IMR-90 (cell line): ENCODE measurements at regions of chr6 and their contacts with region 1.

Region 1: GRCh38 chr6:2738373-2738979 is 12.2 kb downstream of the MYLK4 start:
- DNase-seq: peak; percentile 80
- ATAC-seq: peak; percentile 78
- H3K4me3 ChIP-seq: no peak overlapping the region
- H3K27ac ChIP-seq: no peak overlapping the region
- H3K4me1 ChIP-seq: peaks cover 11% of the 10 kb centered on the region; the same call in 1 of the 2 replicates
- H3K27me3 ChIP-seq: no peaks in the 10 kb centered on the region
- CTCF ChIP-seq: peak; percentile 92
- POLR2A ChIP-seq: no peak
- RAD21 ChIP-seq: peak; percentile 94

Region 2: GRCh38 chr6:2669067-2669700 is 69.3 kb before region 1 on chr6:
- CTCF ChIA-PET with region 1: no interaction called
- POLR2A ChIA-PET with region 1: no interaction called
- dilution Hi-C with region 1: no loop called
- in situ Hi-C with region 1: no loop called
- intact Hi-C with region 1: no loop called
- DNase-seq: no peak
- ATAC-seq: no peak
- H3K4me3 ChIP-seq: no peak overlapping the region
- H3K27ac ChIP-seq: no peak overlapping the region
- H3K4me1 ChIP-seq: no peaks in the 10 kb centered on the region; the same call in 1 of the 2 replicates
- H3K27me3 ChIP-seq: no peaks in the 10 kb centered on the region
- CTCF ChIP-seq: no peak
- POLR2A ChIP-seq: no peak
- RAD21 ChIP-seq: no peak

Region 3: GRCh38 chr6:2749969-2750600 is 11.6 kb after region 1 on chr6:
- CTCF ChIA-PET with region 1: interaction called, 29 read pairs
- POLR2A ChIA-PET with region 1: no interaction called
- dilution Hi-C with region 1: no loop called
- in situ Hi-C with region 1: no loop called
- intact Hi-C with region 1: no loop called
- DNase-seq: peak; percentile 60
- ATAC-seq: peak; percentile 83
- H3K4me3 ChIP-seq: no peak overlapping the region
- H3K27ac ChIP-seq: no peak overlapping the region
- H3K4me1 ChIP-seq: peaks cover 4% of the 10 kb centered on the region; the same call in 1 of the 2 replicates
- H3K27me3 ChIP-seq: no peaks in the 10 kb centered on the region
- CTCF ChIP-seq: peak; percentile 79
- POLR2A ChIP-seq: no peak
- RAD21 ChIP-seq: peak; percentile 59

Region 4: DNA sequence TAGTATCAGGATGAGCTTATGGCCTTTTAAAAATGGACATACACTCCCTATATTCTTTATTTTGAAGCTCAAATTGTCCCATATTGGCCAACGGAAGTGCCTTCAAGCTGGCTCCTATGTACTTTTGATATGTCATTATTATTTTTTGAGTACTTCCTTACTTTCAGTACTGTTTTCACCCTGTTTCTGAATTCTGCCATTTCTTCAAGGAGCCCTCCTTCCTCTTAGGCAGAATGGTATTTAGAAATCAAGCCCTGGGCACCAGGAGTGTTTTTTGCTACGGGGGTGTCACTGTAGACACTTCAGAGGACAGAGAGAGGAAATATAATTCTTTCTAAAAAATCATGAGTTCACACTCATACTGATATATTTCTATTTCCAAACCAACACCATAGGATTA is 17.8 kb after region 1 on chr6:
- CTCF ChIA-PET with region 1: interaction called, 29 read pairs
- POLR2A ChIA-PET with region 1: no interaction called
- dilution Hi-C with region 1: no loop called
- in situ Hi-C with region 1: no loop called
- intact Hi-C with region 1: no loop called
- DNase-seq: no peak
- ATAC-seq: no peak; the same call in 1 of the 2 replicates
- H3K4me3 ChIP-seq: no peak overlapping the region
- H3K27ac ChIP-seq: no peak overlapping the region
- H3K4me1 ChIP-seq: peaks cover 9% of the 10 kb centered on the region
- H3K27me3 ChIP-seq: no peaks in the 10 kb centered on the region
- CTCF ChIP-seq: no peak
- POLR2A ChIP-seq: no peak
- RAD21 ChIP-seq: no peak

Region 5: GRCh38 chr6:2765166-2765895 is 26.9 kb after region 1 on chr6 and contains the start of gene WRNIP1:
- CTCF ChIA-PET with region 1: interaction called, 5 read pairs
- POLR2A ChIA-PET with region 1: no interaction called
- dilution Hi-C with region 1: no loop called
- in situ Hi-C with region 1: no loop called
- intact Hi-C with region 1: loop called (anchors 2 kb)
- DNase-seq: peak; percentile 99
- ATAC-seq: peak; percentile 91
- H3K4me3 ChIP-seq: peak within 1 kb of the TSS; percentile 79
- H3K27ac ChIP-seq: peak within 1 kb of the TSS; percentile 86
- H3K4me1 ChIP-seq: peaks cover 18% of the 10 kb centered on the region
- H3K27me3 ChIP-seq: no peaks in the 10 kb centered on the region
- CTCF ChIP-seq: peak; percentile 86
- POLR2A ChIP-seq: peak; percentile 46
- RAD21 ChIP-seq: peak; percentile 24; the same call in 1 of the 2 replicates
- total RNA-seq, gene WRNIP1: 37.2 and 47.1 TPM in 2 replicates

Region 6: DNA sequence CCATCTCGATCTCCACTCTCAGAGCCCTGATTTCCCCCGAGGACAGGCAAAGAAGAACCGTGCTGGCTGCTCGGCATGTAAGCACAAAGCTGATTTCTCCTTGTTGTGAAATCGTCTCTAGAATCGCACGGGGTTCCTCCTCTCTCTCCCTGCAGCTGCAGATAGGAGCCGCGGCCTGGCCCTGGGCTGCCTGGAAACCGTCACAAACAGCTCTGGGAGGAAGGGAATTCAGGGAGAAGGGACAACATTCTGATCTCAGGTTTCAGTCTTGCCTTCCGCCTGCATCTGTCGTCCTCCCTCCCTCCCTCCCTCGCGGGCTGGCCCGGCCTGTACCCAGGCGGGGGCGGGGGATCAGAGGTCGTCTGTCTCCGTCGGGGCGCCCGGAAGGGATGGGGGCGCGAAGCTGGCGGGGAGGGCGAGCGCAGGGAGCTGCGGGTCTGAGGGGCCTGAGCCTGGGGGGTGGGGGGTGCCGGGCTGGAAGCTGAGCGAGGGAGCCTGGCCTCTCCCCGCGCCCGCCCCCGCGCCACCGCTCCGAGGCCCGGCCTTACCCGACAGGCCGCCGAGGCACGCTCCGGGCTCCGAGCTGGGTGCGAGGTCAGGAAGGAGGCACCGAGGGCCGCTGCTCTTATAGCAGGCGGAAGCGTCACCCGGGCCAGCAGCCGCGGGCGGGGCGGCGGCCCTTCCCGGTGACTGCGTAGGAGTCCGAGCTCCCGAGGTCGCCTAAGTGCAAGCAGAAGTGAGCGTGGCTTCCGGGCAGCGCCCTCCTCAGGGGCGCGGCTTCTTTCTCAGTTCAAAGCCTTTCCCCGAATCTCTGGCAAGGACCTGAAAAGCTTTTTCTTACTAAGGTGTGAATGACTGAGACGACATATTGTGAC is 103.0 kb after region 1 on chr6 and contains the start of gene SERPINB1:
- CTCF ChIA-PET with region 1: interaction called, 3 read pairs
- POLR2A ChIA-PET with region 1: no interaction called
- dilution Hi-C with region 1: no loop called
- in situ Hi-C with region 1: no loop called
- intact Hi-C with region 1: loop called (anchors 5 kb)
- DNase-seq: peak; percentile 97
- ATAC-seq: peak; percentile 92
- H3K4me3 ChIP-seq: peak within 1 kb of the TSS; percentile 34
- H3K27ac ChIP-seq: peak within 1 kb of the TSS; percentile 80
- H3K4me1 ChIP-seq: peaks cover 19% of the 10 kb centered on the region
- H3K27me3 ChIP-seq: no peaks in the 10 kb centered on the region
- CTCF ChIP-seq: no peak
- POLR2A ChIP-seq: peak; percentile 79
- RAD21 ChIP-seq: peak; percentile 16; the same call in 1 of the 2 replicates
- total RNA-seq, gene SERPINB1: 6.1 TPM in 2 replicates

Region 7: GRCh38 chr6:2931970-2932748 is 193.7 kb after region 1 on chr6:
- CTCF ChIA-PET with region 1: no interaction called
- POLR2A ChIA-PET with region 1: no interaction called
- dilution Hi-C with region 1: no loop called
- in situ Hi-C with region 1: no loop called
- intact Hi-C with region 1: loop called (anchors 1 kb)
- DNase-seq: peak; percentile 68
- ATAC-seq: peak; percentile 97
- H3K4me3 ChIP-seq: no peak overlapping the region
- H3K27ac ChIP-seq: no peak overlapping the region
- H3K4me1 ChIP-seq: no peaks in the 10 kb centered on the region
- H3K27me3 ChIP-seq: no peaks in the 10 kb centered on the region
- CTCF ChIP-seq: peak; percentile 90
- POLR2A ChIP-seq: no peak
- RAD21 ChIP-seq: peak; percentile 91

Region 8: GRCh38 chr6:3052481-3053230 is 314.2 kb after region 1 on chr6:
- CTCF ChIA-PET with region 1: no interaction called
- POLR2A ChIA-PET with region 1: no interaction called
- dilution Hi-C with region 1: no loop called
- in situ Hi-C with region 1: no loop called
- intact Hi-C with region 1: loop called (anchors 5 kb)
- DNase-seq: no peak
- ATAC-seq: no peak
- H3K4me3 ChIP-seq: no peak overlapping the region
- H3K27ac ChIP-seq: no peak overlapping the region
- H3K4me1 ChIP-seq: no peaks in the 10 kb centered on the region
- H3K27me3 ChIP-seq: peaks cover 14% of the 10 kb centered on the region; the same call in 1 of the 2 replicates
- CTCF ChIP-seq: no peak
- POLR2A ChIP-seq: no peak
- RAD21 ChIP-seq: no peak